Sigmoid colon (tissue), 7 donors: ENCODE measurements at regions of chr2 and their contacts with region 1.

Region 1: GRCh38 chr2:46780801-46781445 is 134.7 kb downstream of the MCFD2 start:
- DNase-seq: peak; percentile 91
- H3K4me3 ChIP-seq: no peak overlapping the region
- H3K27ac ChIP-seq: peak overlapping the region; percentile 80 to 90 (median 86)
- H3K4me1 ChIP-seq: peaks cover 0 to 37% (median 34%) of the 10 kb centered on the region in 4 donors
- H3K27me3 ChIP-seq: no peaks in the 10 kb centered on the region
- CTCF ChIP-seq: peak in 2 of 4 experiments; percentile 15 to 25
- EP300 ChIP-seq: peak in 3 of 4 donors; percentile 42 to 65 (median 44)
- POLR2A ChIP-seq: no peak

Region 2: GRCh38 chr2:46666044-46666679 is 114.8 kb before region 1 on chr2:
- intact Hi-C with region 1: loop called (anchors 2 kb)
- DNase-seq: peak; percentile 95
- H3K4me3 ChIP-seq: no peak overlapping the region
- H3K27ac ChIP-seq: peak overlapping the region; percentile 58 to 80 (median 78)
- H3K4me1 ChIP-seq: peaks cover 0 to 88% (median 78%) of the 10 kb centered on the region in 4 donors
- H3K27me3 ChIP-seq: no peaks in the 10 kb centered on the region
- CTCF ChIP-seq: no peak
- EP300 ChIP-seq: peak; percentile 60 to 90 (median 80)
- POLR2A ChIP-seq: no peak

Region 3: GRCh38 chr2:46815121-46815785 is 34.3 kb after region 1 on chr2:
- intact Hi-C with region 1: loop called (anchors 5 kb)
- DNase-seq: no peak
- H3K4me3 ChIP-seq: no peak overlapping the region
- H3K27ac ChIP-seq: peak overlapping the region; percentile 72 to 83 (median 78)
- H3K4me1 ChIP-seq: peaks cover 0 to 74% (median 68%) of the 10 kb centered on the region in 4 donors
- H3K27me3 ChIP-seq: no peaks in the 10 kb centered on the region
- CTCF ChIP-seq: no peak
- EP300 ChIP-seq: no peak
- POLR2A ChIP-seq: no peak

Region 4: GRCh38 chr2:46847235-46848068 is 66.5 kb after region 1 on chr2:
- intact Hi-C with region 1: loop called (anchors 1 kb)
- DNase-seq: peak; percentile 99
- H3K4me3 ChIP-seq: no peak overlapping the region
- H3K27ac ChIP-seq: peak overlapping the region; percentile 90 to 95 (median 94)
- H3K4me1 ChIP-seq: peaks cover 0 to 98% (median 80%) of the 10 kb centered on the region in 4 donors
- H3K27me3 ChIP-seq: no peaks in the 10 kb centered on the region
- CTCF ChIP-seq: no peak
- EP300 ChIP-seq: peak; percentile 71 to 96 (median 84)
- POLR2A ChIP-seq: no peak

Region 5: DNA sequence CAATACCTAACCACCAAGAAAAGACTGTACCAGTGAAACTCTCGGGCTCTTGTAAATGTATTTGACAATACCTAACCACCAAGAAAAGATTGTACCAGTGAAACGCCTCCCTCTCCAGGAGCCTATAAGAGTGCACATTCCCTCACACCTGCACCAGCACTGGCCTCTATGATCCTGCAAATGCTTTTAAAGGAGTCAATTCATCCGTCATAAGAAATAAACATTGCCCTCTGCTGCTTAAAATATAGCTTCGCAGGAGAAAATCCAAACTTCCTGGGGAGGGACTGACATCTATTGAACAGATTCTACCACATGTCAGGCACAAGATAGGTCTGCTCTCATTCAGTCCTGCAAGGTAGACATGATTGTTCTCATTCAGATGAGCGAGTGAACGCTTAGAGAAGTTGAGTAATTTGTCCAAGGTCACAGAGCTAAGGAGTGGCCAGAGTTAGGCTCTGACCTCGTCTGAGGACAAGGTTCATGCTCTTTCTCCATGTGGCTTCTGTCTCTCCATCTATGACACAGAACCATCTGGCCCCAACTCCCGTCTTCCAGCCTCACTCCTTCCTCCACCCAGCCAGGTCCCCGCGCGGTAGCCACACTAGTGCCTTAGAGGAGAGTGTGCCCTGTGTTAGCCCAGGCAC is 95.9 kb after region 1 on chr2:
- intact Hi-C with region 1: loop called (anchors 2 kb)
- DNase-seq: no peak
- H3K4me3 ChIP-seq: no peak overlapping the region
- H3K27ac ChIP-seq: peak overlapping the region; percentile 55 to 85 (median 72)
- H3K4me1 ChIP-seq: peaks cover 0 to 66% (median 52%) of the 10 kb centered on the region in 4 donors
- H3K27me3 ChIP-seq: no peaks in the 10 kb centered on the region
- CTCF ChIP-seq: peak; percentile 45 to 59 (median 46)
- EP300 ChIP-seq: no peak
- POLR2A ChIP-seq: no peak